Heart left ventricle (tissue), 16 donors: ENCODE measurements at regions of chr16 and their contacts with region 1.

Region 1: GRCh38 chr16:64711026-64711425 is 410.8 kb downstream of the CDH11 start:
- DNase-seq: no peak
- ATAC-seq: no peak
- H3K4me3 ChIP-seq: no peak overlapping the region
- H3K27ac ChIP-seq: no peak overlapping the region
- H3K4me1 ChIP-seq: no peaks in the 10 kb centered on the region
- H3K27me3 ChIP-seq: no peaks in the 10 kb centered on the region
- CTCF ChIP-seq: no peak
- POLR2A ChIP-seq: no peak

Region 2: DNA sequence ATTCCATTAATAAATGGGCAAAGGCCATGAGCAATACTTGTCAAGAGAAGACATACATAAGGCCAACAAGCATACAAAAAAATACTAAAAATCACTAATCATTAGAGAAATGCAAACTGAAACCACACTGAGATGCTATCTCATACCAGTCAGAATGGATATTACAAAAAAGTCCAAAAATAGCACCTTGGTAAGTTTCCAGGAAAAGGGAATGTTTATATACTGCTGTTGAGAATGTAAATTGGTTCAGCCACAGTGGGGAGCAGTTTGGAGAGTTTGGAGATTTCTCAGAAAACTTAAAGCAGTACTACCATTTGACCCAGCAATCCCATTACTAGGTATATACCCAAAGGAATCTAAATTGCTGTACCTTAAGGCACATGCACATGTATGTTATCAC is 56.8 kb before region 1 on chr16:
- intact Hi-C with region 1: loop called in 1 of 10 experiments (anchors 10 kb)
- DNase-seq: no peak
- ATAC-seq: no peak
- H3K4me3 ChIP-seq: no peak overlapping the region
- H3K27ac ChIP-seq: no peak overlapping the region
- H3K4me1 ChIP-seq: no peaks in the 10 kb centered on the region
- H3K27me3 ChIP-seq: no peaks in the 10 kb centered on the region
- CTCF ChIP-seq: no peak
- POLR2A ChIP-seq: no peak